Endothelial cell of umbilical vein (primary cell): ENCODE measurements at regions of chr1 and their contacts with region 1.

Region 1: DNA sequence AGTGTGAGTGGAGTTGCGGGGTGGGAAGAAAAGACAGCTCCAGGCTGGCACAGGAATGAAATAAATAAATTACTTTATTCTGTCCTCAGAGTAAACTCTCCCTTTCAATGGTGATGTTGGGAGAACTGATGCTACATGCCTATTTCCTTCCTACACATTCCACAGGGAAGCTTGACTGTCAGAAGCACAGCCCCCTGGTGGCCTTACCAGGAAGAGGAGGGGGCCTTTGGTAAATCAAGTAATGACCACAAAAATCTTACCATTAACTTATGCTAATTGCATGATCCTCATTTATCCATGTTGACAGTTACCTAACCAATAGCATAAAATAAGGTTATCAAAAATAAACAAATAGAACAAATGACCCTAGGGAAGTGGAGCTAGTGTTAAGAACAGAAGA is 605.0 kb upstream of the PKN2 start:
- DNase-seq: peak; percentile 8
- H3K4me3 ChIP-seq: no peak overlapping the region
- H3K27ac ChIP-seq: no peak overlapping the region
- H3K4me1 ChIP-seq: no peaks in the 10 kb centered on the region
- H3K27me3 ChIP-seq: peaks cover 0 to 1% of the 10 kb centered on the region in 2 experiments
- CTCF ChIP-seq: peak; percentile 39 to 44
- POLR2A ChIP-seq: no peak

Region 2: DNA sequence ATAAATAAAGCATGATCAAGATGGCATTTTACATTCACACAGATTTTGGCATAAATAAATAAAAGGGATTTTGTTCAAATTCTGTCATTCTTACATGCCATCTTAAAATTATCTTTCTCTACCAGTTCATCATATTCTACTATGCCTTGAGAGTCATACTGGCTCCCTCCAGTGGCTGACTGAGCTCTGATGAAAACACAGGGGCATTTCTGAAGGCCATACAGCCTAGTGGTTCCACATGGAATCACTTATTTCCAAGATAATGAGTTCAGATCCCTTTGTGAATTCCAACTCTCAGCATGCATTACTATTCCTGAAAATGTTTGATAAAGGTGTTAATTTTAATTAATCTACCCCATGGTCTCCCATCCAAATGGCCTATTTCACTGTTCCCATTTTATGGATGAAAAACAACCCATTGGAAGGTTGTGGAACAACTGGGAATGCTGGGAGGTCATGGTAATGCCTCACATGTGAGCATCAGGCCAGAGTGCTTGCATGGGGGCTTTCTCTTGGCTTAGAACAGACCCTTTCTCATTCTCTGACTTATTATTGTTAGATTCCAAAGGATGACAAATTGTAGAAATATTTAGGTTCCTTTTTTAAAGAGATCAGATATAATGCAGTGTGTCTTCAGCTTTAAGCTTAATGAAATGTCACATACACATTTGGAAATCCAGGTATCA is 17.4 kb before region 1 on chr1:
- CTCF ChIA-PET with region 1: interaction called, 10 read pairs
- POLR2A ChIA-PET with region 1: no interaction called
- dilution Hi-C with region 1: no loop called
- intact Hi-C with region 1: no loop called
- DNase-seq: peak; percentile 59
- H3K4me3 ChIP-seq: no peak overlapping the region
- H3K27ac ChIP-seq: no peak overlapping the region
- H3K4me1 ChIP-seq: peaks cover 6% of the 10 kb centered on the region
- H3K27me3 ChIP-seq: no peaks in the 10 kb centered on the region
- CTCF ChIP-seq: peak; percentile 65 to 67
- POLR2A ChIP-seq: no peak

Region 3: GRCh38 chr1:88175631-88176226 is 96.7 kb after region 1 on chr1:
- CTCF ChIA-PET with region 1: no interaction called
- POLR2A ChIA-PET with region 1: no interaction called
- dilution Hi-C with region 1: no loop called
- intact Hi-C with region 1: no loop called
- DNase-seq: no peak
- H3K4me3 ChIP-seq: no peak overlapping the region
- H3K27ac ChIP-seq: no peak overlapping the region
- H3K4me1 ChIP-seq: peaks cover 2% of the 10 kb centered on the region
- H3K27me3 ChIP-seq: peaks cover 2 to 3% of the 10 kb centered on the region in 2 experiments
- CTCF ChIP-seq: no peak
- POLR2A ChIP-seq: no peak